Dorsolateral prefrontal cortex (tissue), 120 donors: ENCODE measurements at regions of chr22 and their contacts with region 1.

Region 1: GRCh38 chr22:20885557-20886323 is 26.9 kb downstream of the SNAP29 start:
- DNase-seq: peak; percentile 57 to 85 (median 78)
- H3K4me3 ChIP-seq: peak overlapping the region in 1 of 59 donors; percentile 26
- H3K27ac ChIP-seq: peak overlapping the region in 55 of 59 donors; percentile 1 to 79 (median 55)
- H3K27me3 ChIP-seq: no peaks in the 10 kb centered on the region
- CTCF ChIP-seq: peak; percentile 34 to 89 (median 78)

Region 2: GRCh38 chr22:20973634-20974286 is 88.0 kb after region 1 on chr22:
- intact Hi-C with region 1: loop called in 1 of 2 experiments (anchors 2 kb)
- DNase-seq: no peak
- H3K4me3 ChIP-seq: peak overlapping the region in 1 of 59 donors; percentile 12
- H3K27ac ChIP-seq: peak overlapping the region in 1 of 59 donors; percentile 54
- H3K27me3 ChIP-seq: no peaks in the 10 kb centered on the region
- CTCF ChIP-seq: no peak

Region 3: DNA sequence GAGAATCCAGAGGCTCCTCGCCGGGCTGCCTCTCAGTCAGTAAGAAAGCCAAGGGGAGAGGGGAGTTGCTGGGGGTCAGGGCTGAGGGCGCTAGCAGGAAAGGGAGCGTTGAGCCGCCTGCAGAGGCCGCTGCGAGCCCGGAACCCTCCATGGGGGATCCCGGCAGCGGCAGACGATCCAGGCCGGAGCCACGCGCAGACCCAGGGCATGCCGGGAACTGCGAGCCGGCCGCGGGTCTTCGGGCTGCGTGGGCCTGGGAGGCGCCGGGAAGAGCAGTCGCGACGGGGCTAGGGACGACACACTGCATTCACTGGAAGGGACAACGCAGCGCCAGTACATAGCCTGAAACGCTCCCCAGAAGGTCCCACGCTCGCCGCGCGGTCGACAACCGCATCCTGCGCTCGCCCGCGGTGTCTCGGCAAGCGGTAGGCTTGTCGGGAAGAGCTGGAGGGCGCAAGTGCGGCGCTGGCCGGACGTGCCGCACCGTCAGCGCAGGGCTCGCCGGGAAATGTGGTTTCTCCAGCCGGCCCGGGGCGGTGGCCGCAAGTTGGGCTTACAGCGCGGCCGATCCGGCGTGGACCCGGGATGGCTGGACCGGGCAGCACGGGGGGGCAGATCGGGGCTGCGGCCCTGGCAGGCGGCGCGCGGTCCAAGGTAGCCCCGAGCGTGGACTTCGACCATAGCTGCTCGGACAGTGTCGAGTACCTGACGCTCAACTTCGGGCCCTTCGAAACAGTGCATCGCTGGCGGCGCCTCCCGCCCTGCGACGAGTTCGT is 96.2 kb after region 1 on chr22 and contains the start of gene LZTR1:
- intact Hi-C with region 1: loop called in 1 of 2 experiments (anchors 2 kb)
- DNase-seq: peak; percentile 75 to 93 (median 85)
- H3K4me3 ChIP-seq: peak within 1 kb of the TSS; percentile 69 to 99 (median 90)
- H3K27ac ChIP-seq: peak within 1 kb of the TSS; percentile 76 to 99 (median 96)
- H3K27me3 ChIP-seq: no peaks in the 10 kb centered on the region
- CTCF ChIP-seq: peak; percentile 31 to 84 (median 63)
- total RNA-seq, gene LZTR1: 48.3 to 115 (median 73.6) TPM

Region 4: GRCh38 chr22:21569459-21570170 is 683.9 kb after region 1 on chr22:
- intact Hi-C with region 1: no loop called
- DNase-seq: no peak
- H3K4me3 ChIP-seq: peak overlapping the region in 38 of 59 donors; percentile 3 to 99 (median 88)
- H3K27ac ChIP-seq: peak overlapping the region in 2 of 59 donors; percentile 6 to 17
- H3K27me3 ChIP-seq: no peaks in the 10 kb centered on the region
- CTCF ChIP-seq: no peak